Activated CD8-positive, alpha-beta T cell treated with anti-CD3 and anti-CD28 coated beads, Interleukin-2, amount 10 ng/mL, durations not matched to agents 7 days and 5 days (primary cell): ENCODE measurements at regions of chr6 and their contacts with region 1.

Region 1: DNA sequence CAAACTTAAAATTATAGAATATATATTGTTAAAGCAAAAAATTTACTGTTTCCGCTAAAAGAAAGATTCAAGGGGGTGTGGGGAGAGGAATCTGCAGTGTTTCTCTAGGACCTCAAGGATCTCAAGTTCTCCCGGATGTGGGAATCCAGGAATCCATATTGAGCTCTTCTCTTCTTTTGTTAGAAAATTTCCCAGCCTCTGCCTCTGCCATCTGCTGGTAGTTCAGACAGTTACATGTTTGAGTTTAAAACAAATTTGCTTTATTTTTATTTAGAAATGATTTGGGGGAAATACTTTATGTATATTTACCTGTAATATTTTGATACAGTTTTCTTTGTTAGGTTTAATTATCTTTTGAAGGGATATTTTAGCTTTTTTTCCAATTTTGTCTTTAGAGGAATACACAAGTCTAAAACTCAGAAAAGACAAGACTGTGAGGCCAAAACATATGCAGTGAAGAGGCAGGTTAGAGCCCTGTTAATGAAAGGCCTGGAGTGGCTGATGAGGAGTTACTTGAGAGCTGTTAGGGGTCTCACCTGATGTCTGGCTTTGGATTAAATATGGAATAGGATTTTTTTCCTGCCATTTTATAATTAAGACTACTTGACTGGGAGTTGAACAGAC is 268.8 kb downstream of the ARID1B start:
- DNase-seq: no peak
- ATAC-seq: no peak
- H3K4me3 Mint-ChIP-seq: no peak overlapping the region
- H3K27ac Mint-ChIP-seq: no peak overlapping the region
- H3K4me1 Mint-ChIP-seq: no peaks in the 10 kb centered on the region
- H3K27me3 Mint-ChIP-seq: no peaks in the 10 kb centered on the region

Region 2: GRCh38 chr6:157034436-157035230 is 11.3 kb before region 1 on chr6:
- CTCF ChIA-PET with region 1: interaction called, 45 read pairs
- POLR2A ChIA-PET with region 1: no interaction called
- DNase-seq: no peak
- ATAC-seq: peak; percentile 52
- H3K4me3 Mint-ChIP-seq: peak overlapping the region; percentile 47
- H3K27ac Mint-ChIP-seq: no peak overlapping the region
- H3K4me1 Mint-ChIP-seq: peaks cover 18% of the 10 kb centered on the region
- H3K27me3 Mint-ChIP-seq: no peaks in the 10 kb centered on the region

Region 3: GRCh38 chr6:157068691-157069324 is 22.9 kb after region 1 on chr6:
- CTCF ChIA-PET with region 1: interaction called, 10 read pairs
- POLR2A ChIA-PET with region 1: no interaction called
- DNase-seq: no peak
- ATAC-seq: peak; percentile 39
- H3K4me3 Mint-ChIP-seq: no peak overlapping the region
- H3K27ac Mint-ChIP-seq: peak overlapping the region; percentile 6
- H3K4me1 Mint-ChIP-seq: peaks cover 30% of the 10 kb centered on the region
- H3K27me3 Mint-ChIP-seq: no peaks in the 10 kb centered on the region